K562 (cell line): ENCODE measurements at regions of chr1 and their contacts with region 1.

Region 1: DNA sequence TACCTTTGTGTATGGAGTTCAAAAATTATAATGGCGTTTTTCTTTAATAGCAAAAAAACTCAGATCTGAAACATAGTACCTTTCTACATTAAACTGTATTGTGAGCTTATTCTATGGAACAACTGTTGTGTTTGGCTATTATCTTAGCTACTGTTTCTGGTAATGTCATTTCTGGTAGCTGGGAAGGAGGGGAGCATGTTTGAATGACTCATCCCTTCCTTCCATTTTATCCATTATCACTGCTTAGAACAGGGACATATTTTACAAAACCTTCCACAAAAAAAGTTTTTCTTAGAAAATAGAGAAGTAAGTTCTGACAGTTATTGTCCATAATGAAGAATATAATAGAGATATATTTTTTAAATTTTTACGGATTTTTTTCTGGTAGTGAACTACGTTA is 128.3 kb downstream of the NRDC start:
- DNase-seq: peak in 3 of 4 experiments; percentile 32 to 79 (median 55)
- ATAC-seq: peak; percentile 70
- H3K4me3 ChIP-seq: no peak overlapping the region
- H3K27ac ChIP-seq: peak overlapping the region; percentile 63; the same call in 2 of the 3 replicates
- H3K4me1 ChIP-seq: peaks cover 21 to 35% of the 10 kb centered on the region in 2 experiments; a peak in 3 of 5 replicates
- H3K27me3 ChIP-seq: no peaks in the 10 kb centered on the region
- CTCF ChIP-seq: no peak
- EP300 ChIP-seq: peak; percentile 43; the same call in 1 of the 2 replicates
- POLR2A ChIP-seq: no peak
- RAD21 ChIP-seq: no peak

Region 2: DNA sequence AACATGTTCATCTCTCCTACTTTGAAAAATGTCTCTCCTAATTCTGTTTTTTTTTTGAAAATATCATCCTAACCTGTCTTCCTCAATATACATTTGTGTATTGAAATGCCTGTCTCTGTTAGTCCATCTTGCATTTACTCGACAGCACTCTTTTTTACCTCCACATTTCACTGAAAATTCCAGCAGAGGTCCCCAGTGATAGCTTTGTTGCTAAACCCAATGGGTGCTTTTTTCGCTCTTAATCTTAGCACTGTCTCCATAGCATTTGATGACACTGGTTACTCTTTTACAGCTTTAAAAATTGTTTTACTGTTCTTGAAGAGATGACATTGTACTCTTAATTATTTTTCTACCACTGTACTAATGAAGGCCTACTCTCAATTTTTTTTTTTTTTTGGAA is 122.5 kb before region 1 on chr1:
- CTCF ChIA-PET with region 1: no interaction called
- POLR2A ChIA-PET with region 1: interaction called, 3 read pairs
- in situ Hi-C with region 1: no loop called
- intact Hi-C with region 1: loop called (anchors 5 kb)
- DNase-seq: peak in 2 of 4 experiments; percentile 63 to 80
- ATAC-seq: peak; percentile 71
- H3K4me3 ChIP-seq: no peak overlapping the region
- H3K27ac ChIP-seq: no peak overlapping the region
- H3K4me1 ChIP-seq: peaks cover 21 to 35% of the 10 kb centered on the region in 2 experiments
- H3K27me3 ChIP-seq: no peaks in the 10 kb centered on the region
- CTCF ChIP-seq: peak; percentile 65 to 83 (median 72)
- EP300 ChIP-seq: no peak
- POLR2A ChIP-seq: no peak
- RAD21 ChIP-seq: peak; percentile 70 to 91

Region 3: GRCh38 chr1:51679435-51679834 is 70.8 kb before region 1 on chr1:
- CTCF ChIA-PET with region 1: no interaction called
- POLR2A ChIA-PET with region 1: no interaction called
- in situ Hi-C with region 1: no loop called
- intact Hi-C with region 1: no loop called
- DNase-seq: no peak
- ATAC-seq: no peak
- H3K4me3 ChIP-seq: no peak overlapping the region
- H3K27ac ChIP-seq: no peak overlapping the region
- H3K4me1 ChIP-seq: no peaks in the 10 kb centered on the region
- H3K27me3 ChIP-seq: no peaks in the 10 kb centered on the region
- CTCF ChIP-seq: no peak
- EP300 ChIP-seq: no peak
- POLR2A ChIP-seq: no peak
- RAD21 ChIP-seq: no peak

Region 4: DNA sequence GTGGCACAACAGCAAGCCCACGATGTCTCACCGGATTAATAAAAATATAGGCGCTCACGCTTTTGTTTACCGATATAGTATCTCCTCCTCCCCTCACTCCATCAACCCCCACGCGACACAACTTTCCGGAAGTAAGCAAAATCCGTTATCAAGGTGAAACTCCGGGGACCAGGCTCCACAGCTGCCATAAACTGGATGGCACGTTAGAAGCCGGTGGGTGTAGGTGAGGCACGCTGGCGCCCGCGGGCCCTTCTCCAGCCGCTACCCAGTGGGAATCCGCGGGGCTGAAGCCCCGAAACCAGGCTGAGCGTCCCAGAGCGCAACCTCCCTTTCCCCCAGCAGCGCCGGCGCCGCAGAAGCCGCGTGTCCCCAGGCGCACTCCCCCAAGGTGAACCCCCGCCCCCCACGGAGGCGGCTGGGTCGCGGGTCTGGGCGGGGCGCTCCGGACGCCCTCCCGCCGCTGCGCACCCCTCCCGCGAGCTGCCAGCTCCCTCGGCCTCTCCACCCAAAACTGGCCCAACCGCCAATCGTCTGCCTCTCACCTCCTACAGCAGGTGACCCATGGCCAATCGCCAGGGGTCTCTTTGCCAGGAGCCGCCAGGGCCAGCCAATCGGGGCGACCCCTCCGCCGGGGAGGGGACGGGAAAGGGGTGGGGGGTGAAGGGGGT is 20.9 kb before region 1 on chr1:
- CTCF ChIA-PET with region 1: no interaction called
- POLR2A ChIA-PET with region 1: interaction called, 34 read pairs
- in situ Hi-C with region 1: no loop called
- intact Hi-C with region 1: loop called (anchors 2 kb)
- DNase-seq: peak; percentile 99 to 100 (median 100)
- ATAC-seq: peak; percentile 84
- H3K4me3 ChIP-seq: peak overlapping the region; percentile 73
- H3K27ac ChIP-seq: peak overlapping the region; percentile 88
- H3K4me1 ChIP-seq: peaks cover 28 to 34% of the 10 kb centered on the region in 2 experiments
- H3K27me3 ChIP-seq: no peaks in the 10 kb centered on the region
- CTCF ChIP-seq: no peak
- EP300 ChIP-seq: peak; percentile 32; the same call in 1 of the 2 replicates
- POLR2A ChIP-seq: peak; percentile 94
- RAD21 ChIP-seq: 0 out of 4 replicates have a peak, but pooled peaks of 1 of the 2 experiments have one; percentile 10

Region 5: GRCh38 chr1:51736702-51737101 is 13.5 kb before region 1 on chr1:
- CTCF ChIA-PET with region 1: no interaction called
- POLR2A ChIA-PET with region 1: interaction called, 44 read pairs
- in situ Hi-C with region 1: no loop called
- intact Hi-C with region 1: loop called (anchors 2 kb)
- DNase-seq: peak; percentile 24 to 92 (median 40)
- ATAC-seq: peak; percentile 36
- H3K4me3 ChIP-seq: no peak overlapping the region
- H3K27ac ChIP-seq: peak overlapping the region; percentile 69; the same call in 2 of the 3 replicates
- H3K4me1 ChIP-seq: peaks cover 21 to 74% of the 10 kb centered on the region in 2 experiments
- H3K27me3 ChIP-seq: no peaks in the 10 kb centered on the region
- CTCF ChIP-seq: no peak
- EP300 ChIP-seq: peak; percentile 52; the same call in 1 of the 2 replicates
- POLR2A ChIP-seq: no peak
- RAD21 ChIP-seq: no peak

Region 6: DNA sequence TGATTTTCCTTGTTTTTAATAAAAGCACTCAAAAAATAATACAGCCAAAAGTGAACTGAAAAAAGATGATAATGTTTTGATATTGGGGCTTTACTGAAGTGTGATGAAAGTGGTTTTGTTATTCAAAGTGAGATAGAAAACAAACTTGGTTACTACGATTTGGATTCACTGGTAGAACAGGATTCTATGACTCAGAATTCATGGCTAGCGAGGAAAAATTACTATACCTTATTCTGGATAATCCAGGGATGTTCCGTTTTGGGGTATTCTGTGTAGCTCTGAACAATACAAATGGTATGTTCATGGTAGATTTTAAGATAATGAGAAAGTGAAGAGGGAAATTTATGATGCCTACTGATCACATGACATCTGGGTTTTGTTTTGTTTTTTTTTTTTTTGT is 10.7 kb after region 1 on chr1:
- CTCF ChIA-PET with region 1: no interaction called
- POLR2A ChIA-PET with region 1: interaction called, 24 read pairs
- in situ Hi-C with region 1: no loop called
- intact Hi-C with region 1: no loop called
- DNase-seq: no peak
- ATAC-seq: no peak
- H3K4me3 ChIP-seq: no peak overlapping the region
- H3K27ac ChIP-seq: no peak overlapping the region
- H3K4me1 ChIP-seq: no peaks in the 10 kb centered on the region
- H3K27me3 ChIP-seq: no peaks in the 10 kb centered on the region
- CTCF ChIP-seq: no peak
- EP300 ChIP-seq: no peak
- POLR2A ChIP-seq: no peak
- RAD21 ChIP-seq: no peak